ENCODE measurements at regions of chr4 and their contacts with region 1.

Region 1: GRCh38 chr4:120870279-120870673 is 52.2 kb downstream of the PRDM5 start:
- DNase-seq: peak; percentile 61
- ATAC-seq: peak; percentile 82
- H3K4me3 Mint-ChIP-seq: no peak overlapping the region
- H3K27ac Mint-ChIP-seq: peak overlapping the region; percentile 60
- H3K4me1 Mint-ChIP-seq: peaks cover 40% of the 10 kb centered on the region
- H3K27me3 Mint-ChIP-seq: no peaks in the 10 kb centered on the region
- CTCF ChIP-seq: 0 out of 2 replicates have a peak, but pooled peaks have one; percentile 17

Region 2: GRCh38 chr4:120843849-120844527 is 26.3 kb before region 1 on chr4:
- CTCF ChIA-PET with region 1: interaction called, 14 read pairs
- POLR2A ChIA-PET with region 1: no interaction called
- DNase-seq: peak; percentile 60
- ATAC-seq: peak; percentile 95
- H3K4me3 Mint-ChIP-seq: no peak overlapping the region
- H3K27ac Mint-ChIP-seq: no peak overlapping the region
- H3K4me1 Mint-ChIP-seq: peaks cover 8% of the 10 kb centered on the region
- H3K27me3 Mint-ChIP-seq: no peaks in the 10 kb centered on the region
- CTCF ChIP-seq: peak; percentile 30; the same call in 1 of the 2 replicates

Measured in WTC11 (cell line).